Activated CD4-positive, alpha-beta memory T cell treated with anti-CD3 and anti-CD28 coated beads for 36 hours (primary cell): ENCODE measurements at regions of chr2 and their contacts with region 1.

Region 1: GRCh38 chr2:170409164-170409535 is 231.2 kb downstream of the MYO3B start:
- DNase-seq: peak; percentile 80
- H3K4me3 Mint-ChIP-seq: no peak overlapping the region
- H3K27ac Mint-ChIP-seq: no peak overlapping the region
- H3K4me1 Mint-ChIP-seq: peaks cover 5% of the 10 kb centered on the region
- H3K27me3 Mint-ChIP-seq: peaks cover 20% of the 10 kb centered on the region

Region 2: GRCh38 chr2:170073288-170073687 is 335.9 kb before region 1 on chr2:
- CTCF ChIA-PET with region 1: no interaction called
- POLR2A ChIA-PET with region 1: no interaction called
- intact Hi-C with region 1: no loop called
- DNase-seq: no peak
- H3K4me3 Mint-ChIP-seq: no peak overlapping the region
- H3K27ac Mint-ChIP-seq: no peak overlapping the region
- H3K4me1 Mint-ChIP-seq: no peaks in the 10 kb centered on the region
- H3K27me3 Mint-ChIP-seq: no peaks in the 10 kb centered on the region

Region 3: DNA sequence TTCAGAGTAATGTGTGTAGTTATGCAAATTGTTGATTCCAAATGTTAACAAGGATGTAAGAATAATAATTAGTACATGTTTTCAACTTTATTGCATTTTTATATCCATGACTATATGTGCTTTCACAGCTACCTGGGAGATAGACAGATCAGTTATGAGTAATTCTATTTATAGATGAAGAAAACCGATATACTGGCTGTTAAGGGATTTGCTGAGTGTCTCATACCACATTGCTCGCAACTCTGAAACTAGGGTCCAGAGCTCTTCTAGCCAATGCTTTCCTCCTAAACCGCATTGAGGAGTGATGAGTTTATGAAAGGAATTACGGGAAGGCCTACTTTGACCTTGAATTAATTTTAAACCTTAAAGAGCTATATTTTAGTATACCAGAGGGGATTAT is 28.9 kb before region 1 on chr2:
- CTCF ChIA-PET with region 1: interaction called, 10 read pairs
- POLR2A ChIA-PET with region 1: no interaction called
- intact Hi-C with region 1: no loop called
- DNase-seq: no peak
- H3K4me3 Mint-ChIP-seq: no peak overlapping the region
- H3K27ac Mint-ChIP-seq: no peak overlapping the region
- H3K4me1 Mint-ChIP-seq: no peaks in the 10 kb centered on the region
- H3K27me3 Mint-ChIP-seq: peaks cover 13% of the 10 kb centered on the region

Region 4: DNA sequence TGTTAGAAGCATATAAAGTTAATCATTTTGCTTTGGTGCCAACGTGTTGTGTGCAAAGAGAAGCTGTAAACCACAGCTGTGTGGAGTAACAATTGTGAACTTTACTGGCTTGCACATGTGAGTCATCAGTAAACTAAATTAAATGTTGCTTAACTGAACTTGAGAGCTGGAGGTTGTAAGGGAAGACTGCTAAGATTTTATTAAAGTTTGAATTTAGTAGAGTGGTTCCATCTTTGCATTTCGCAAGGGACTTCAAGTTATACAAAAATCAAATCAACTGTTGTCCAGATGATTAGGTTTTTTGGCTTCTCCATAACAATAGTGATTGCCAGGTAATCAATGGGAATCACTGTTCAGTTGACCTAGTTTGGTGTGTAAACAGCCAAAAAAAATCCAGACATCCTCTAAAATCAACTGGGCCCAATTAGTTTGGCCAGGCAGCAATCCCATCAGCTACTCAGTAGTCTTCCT is 16.2 kb after region 1 on chr2:
- CTCF ChIA-PET with region 1: interaction called, 13 read pairs
- POLR2A ChIA-PET with region 1: no interaction called
- intact Hi-C with region 1: no loop called
- DNase-seq: no peak
- H3K4me3 Mint-ChIP-seq: no peak overlapping the region
- H3K27ac Mint-ChIP-seq: no peak overlapping the region
- H3K4me1 Mint-ChIP-seq: no peaks in the 10 kb centered on the region
- H3K27me3 Mint-ChIP-seq: peaks cover 11% of the 10 kb centered on the region

Region 5: DNA sequence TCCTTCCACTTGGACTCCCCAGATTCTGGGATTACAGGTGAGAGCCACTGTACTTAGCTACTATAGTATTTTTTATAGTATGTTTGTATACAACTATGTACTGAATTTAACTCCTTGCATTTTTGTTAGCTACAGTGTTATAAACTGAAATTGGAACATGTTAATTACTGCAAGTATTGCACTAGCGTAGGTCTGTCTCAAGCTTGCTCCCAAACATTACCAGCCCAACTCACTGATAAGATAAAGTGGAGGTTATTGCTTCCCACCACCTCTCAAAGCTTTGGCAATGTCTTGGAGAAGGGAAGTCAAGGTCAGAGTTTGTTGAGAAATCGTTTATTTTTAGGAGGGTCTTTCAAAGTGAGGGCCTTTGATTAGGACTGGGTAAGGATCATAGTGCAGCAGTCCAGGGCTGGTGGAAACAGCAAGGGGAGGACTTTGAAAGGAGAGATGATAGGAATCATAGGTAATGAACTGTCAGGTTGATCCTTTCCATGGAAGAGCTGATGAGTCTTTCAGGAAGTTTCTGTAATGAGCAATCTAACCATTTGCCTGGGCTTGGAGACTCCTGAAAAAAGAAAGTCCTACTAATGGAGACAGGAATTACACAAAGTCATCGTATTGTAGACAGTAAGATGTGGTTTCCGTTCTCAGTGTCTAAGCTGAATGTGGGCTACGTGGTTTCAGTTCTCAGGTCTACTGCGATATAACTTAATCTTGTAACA is 25.9 kb after region 1 on chr2:
- CTCF ChIA-PET with region 1: interaction called, 12 read pairs
- POLR2A ChIA-PET with region 1: no interaction called
- intact Hi-C with region 1: no loop called
- DNase-seq: no peak
- H3K4me3 Mint-ChIP-seq: no peak overlapping the region
- H3K27ac Mint-ChIP-seq: no peak overlapping the region
- H3K4me1 Mint-ChIP-seq: peaks cover 17% of the 10 kb centered on the region
- H3K27me3 Mint-ChIP-seq: peaks cover 15% of the 10 kb centered on the region

Region 6: DNA sequence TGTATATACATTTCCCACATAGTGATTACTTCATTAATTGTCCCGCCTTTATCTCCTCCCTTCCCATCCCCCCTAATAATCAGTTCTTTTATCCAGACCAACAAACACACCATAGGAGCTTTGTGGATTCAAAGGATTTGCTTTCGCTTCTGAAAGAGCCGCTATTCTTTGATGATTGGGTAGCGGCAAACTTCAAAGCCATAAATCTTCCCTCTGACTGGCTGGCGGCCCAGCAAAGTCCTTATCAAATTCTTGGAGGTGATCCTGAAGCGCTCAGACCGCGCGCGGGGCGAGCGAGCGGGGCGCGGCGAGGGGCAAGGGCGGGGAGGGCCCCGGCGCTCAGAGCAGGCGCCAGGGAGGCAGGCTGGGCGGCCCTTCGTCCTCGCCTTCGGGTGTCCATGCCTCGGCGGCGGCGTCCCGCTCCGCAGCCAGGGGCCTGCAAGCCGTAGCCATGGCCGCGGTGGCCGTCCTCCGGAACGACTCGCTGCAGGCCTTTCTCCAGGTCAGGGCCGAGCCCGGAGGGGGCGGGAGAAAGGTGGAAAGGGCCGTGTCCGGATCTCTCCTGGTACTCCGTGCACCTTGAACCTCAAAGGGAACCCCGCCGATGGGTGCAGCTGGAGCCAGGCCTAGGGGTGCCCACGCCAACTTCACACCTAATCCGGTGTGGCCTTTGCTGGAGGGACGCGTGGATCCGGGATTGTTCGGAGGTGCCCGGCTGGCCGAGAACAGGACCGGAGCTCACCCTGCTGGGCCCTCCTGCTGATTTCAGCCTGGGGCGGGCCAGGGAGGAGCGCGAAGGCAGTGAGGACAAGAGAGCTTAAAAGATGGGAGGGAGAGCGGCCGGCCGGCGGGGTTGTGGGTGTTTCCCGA is 306.1 kb after region 1 on chr2 and contains the start of gene SP5:
- CTCF ChIA-PET with region 1: interaction called, 7 read pairs
- POLR2A ChIA-PET with region 1: no interaction called
- intact Hi-C with region 1: loop called (anchors 5 kb)
- DNase-seq: peak; percentile 40
- H3K4me3 Mint-ChIP-seq: peak within 1 kb of the TSS; percentile 69
- H3K27ac Mint-ChIP-seq: no peak within 1 kb of the TSS
- H3K4me1 Mint-ChIP-seq: peaks cover 37% of the 10 kb centered on the region
- H3K27me3 Mint-ChIP-seq: peaks cover 68% of the 10 kb centered on the region
- total RNA-seq, gene SP5: not detected

Region 7: DNA sequence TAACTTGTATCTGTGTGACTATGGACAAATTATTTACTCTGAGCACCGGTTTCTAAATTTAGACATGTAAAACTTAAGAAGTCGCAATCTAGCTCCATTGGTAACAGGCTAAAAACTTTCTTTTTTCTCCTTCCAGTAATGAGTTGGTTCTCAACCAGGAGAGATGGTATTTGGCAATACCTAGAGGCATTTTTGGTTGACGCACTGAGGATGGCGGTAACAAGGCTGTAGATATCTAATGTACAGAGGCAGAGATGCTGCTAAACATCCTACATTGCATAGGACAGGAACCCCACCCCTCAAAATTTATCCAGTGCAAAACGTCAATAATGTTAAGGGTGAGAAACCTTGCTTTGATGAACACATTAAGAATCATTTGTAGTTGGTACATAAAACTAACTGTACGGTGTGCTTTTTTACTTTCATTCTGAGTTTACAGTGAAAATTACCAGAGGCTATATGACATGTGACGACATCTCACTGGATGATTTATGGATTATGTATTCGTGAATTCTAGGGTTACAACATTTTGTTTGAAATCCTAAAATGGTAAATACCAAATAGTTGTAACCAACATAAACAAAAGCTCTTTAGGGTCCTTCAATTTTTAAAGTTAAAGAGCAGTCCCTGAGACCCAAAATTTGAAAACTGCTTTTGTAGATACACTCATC is 660.3 kb after region 1 on chr2:
- CTCF ChIA-PET with region 1: no interaction called
- POLR2A ChIA-PET with region 1: no interaction called
- intact Hi-C with region 1: no loop called
- DNase-seq: no peak
- H3K4me3 Mint-ChIP-seq: no peak overlapping the region
- H3K27ac Mint-ChIP-seq: peak overlapping the region; percentile 18
- H3K4me1 Mint-ChIP-seq: peaks cover 11% of the 10 kb centered on the region
- H3K27me3 Mint-ChIP-seq: no peaks in the 10 kb centered on the region